Mammary epithelial cell (primary cell): ENCODE measurements at regions of chr11 and their contacts with region 1.

Region 1: GRCh38 chr11:2912498-2912897 is 16.7 kb downstream of the PHLDA2 start:
- DNase-seq: peak; percentile 96
- H3K4me3 ChIP-seq: peak overlapping the region in 1 of 3 experiments; percentile 7
- H3K27ac ChIP-seq: no peak overlapping the region
- H3K4me1 ChIP-seq: peaks cover 37% of the 10 kb centered on the region
- H3K27me3 ChIP-seq: no peaks in the 10 kb centered on the region
- CTCF ChIP-seq: no peak

Region 2: GRCh38 chr11:2867722-2868505 is 44.6 kb before region 1 on chr11:
- CTCF ChIA-PET with region 1: no interaction called
- dilution Hi-C with region 1: no loop called
- in situ Hi-C with region 1: no loop called
- intact Hi-C with region 1: no loop called
- DNase-seq: no peak
- H3K4me3 ChIP-seq: no peak overlapping the region
- H3K27ac ChIP-seq: no peak overlapping the region
- H3K4me1 ChIP-seq: no peaks in the 10 kb centered on the region
- H3K27me3 ChIP-seq: peaks cover 28% of the 10 kb centered on the region
- CTCF ChIP-seq: no peak

Region 3: GRCh38 chr11:2901854-2902783 is 10.4 kb before region 1 on chr11:
- CTCF ChIA-PET with region 1: no interaction called
- dilution Hi-C with region 1: no loop called
- in situ Hi-C with region 1: no loop called
- intact Hi-C with region 1: loop called (anchors 1 kb)
- DNase-seq: peak; percentile 84
- H3K4me3 ChIP-seq: peak overlapping the region; percentile 61 to 76 (median 63)
- H3K27ac ChIP-seq: peak overlapping the region; percentile 58
- H3K4me1 ChIP-seq: peaks cover 54% of the 10 kb centered on the region
- H3K27me3 ChIP-seq: no peaks in the 10 kb centered on the region
- CTCF ChIP-seq: no peak

Region 4: GRCh38 chr11:2975594-2975993 is 63.1 kb after region 1 on chr11:
- CTCF ChIA-PET with region 1: no interaction called
- dilution Hi-C with region 1: no loop called
- in situ Hi-C with region 1: no loop called
- intact Hi-C with region 1: no loop called
- DNase-seq: no peak
- H3K4me3 ChIP-seq: no peak overlapping the region
- H3K27ac ChIP-seq: no peak overlapping the region
- H3K4me1 ChIP-seq: peaks cover 6% of the 10 kb centered on the region
- H3K27me3 ChIP-seq: no peaks in the 10 kb centered on the region
- CTCF ChIP-seq: peak; percentile 49 to 64